Activated naive CD4-positive, alpha-beta T cell treated with anti-CD3 and anti-CD28 coated beads for 36 hours (primary cell): ENCODE measurements at regions of chr22 and their contacts with region 1.

Region 1: DNA sequence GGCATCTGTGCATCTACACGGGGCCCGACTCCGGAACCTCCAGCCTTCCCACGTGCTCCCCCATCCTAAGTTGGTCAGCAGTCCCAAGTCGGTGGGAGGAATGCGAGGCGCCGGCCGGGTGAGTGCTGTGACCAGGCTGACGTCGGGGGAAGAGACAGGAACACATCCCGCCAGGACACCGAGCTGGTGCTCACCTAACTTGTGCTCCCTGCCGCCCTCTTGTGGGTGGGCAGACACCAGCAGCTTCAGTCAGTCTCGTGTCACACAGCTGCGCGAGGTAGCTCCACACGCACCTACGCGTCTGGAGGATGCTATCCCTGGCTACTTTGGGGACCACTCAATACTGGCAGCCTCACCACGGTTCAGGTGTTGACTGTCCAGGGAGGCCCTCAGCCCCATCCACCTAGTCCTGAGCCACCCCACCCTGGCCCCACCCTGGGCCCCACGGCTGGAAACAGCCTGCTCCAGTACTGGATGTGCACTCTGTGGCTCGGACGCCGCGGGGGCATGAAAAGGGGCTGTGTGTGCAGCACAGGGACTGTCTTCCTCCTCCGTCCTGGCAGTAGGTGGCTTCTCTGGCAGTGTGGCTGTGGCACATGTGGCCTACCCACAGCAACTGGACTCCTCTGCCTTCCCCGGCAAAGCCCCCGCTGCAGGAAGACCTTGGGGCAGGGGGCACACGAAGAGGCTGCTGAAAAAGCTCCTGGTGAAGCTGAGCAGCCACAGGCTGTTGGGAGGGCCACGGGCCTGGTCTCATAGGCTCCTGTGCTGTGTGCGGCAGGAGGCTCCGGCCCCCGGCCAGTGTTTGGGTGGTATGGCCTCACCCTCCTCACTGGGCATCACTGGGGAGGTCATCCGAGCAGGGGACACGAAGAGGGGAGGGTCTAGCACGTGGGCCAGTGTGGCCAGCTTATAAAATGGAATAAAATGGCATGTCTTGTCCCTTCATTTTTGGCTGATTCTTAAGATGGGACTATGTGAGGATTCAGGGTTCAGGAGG is 11.2 kb upstream of the BID start:
- DNase-seq: peak; percentile 76
- H3K4me3 Mint-ChIP-seq: no peak overlapping the region
- H3K27ac Mint-ChIP-seq: no peak overlapping the region
- H3K4me1 Mint-ChIP-seq: peaks cover 20% of the 10 kb centered on the region
- H3K27me3 Mint-ChIP-seq: no peaks in the 10 kb centered on the region

Region 2: GRCh38 chr22:17213976-17214375 is 571.5 kb before region 1 on chr22:
- CTCF ChIA-PET with region 1: no interaction called
- intact Hi-C with region 1: loop called (anchors 5 kb)
- DNase-seq: peak; percentile 73
- H3K4me3 Mint-ChIP-seq: no peak overlapping the region
- H3K27ac Mint-ChIP-seq: no peak overlapping the region
- H3K4me1 Mint-ChIP-seq: peaks cover 48% of the 10 kb centered on the region
- H3K27me3 Mint-ChIP-seq: no peaks in the 10 kb centered on the region

Region 3: GRCh38 chr22:17706018-17706900 is 79.2 kb before region 1 on chr22:
- CTCF ChIA-PET with region 1: interaction called, 4 read pairs
- intact Hi-C with region 1: loop called (anchors 1 kb)
- DNase-seq: peak; percentile 67
- H3K4me3 Mint-ChIP-seq: peak overlapping the region; percentile 49
- H3K27ac Mint-ChIP-seq: peak overlapping the region; percentile 89
- H3K4me1 Mint-ChIP-seq: peaks cover 20% of the 10 kb centered on the region
- H3K27me3 Mint-ChIP-seq: no peaks in the 10 kb centered on the region

Region 4: GRCh38 chr22:17754233-17754925 is 31.1 kb before region 1 on chr22:
- CTCF ChIA-PET with region 1: interaction called, 12 read pairs
- intact Hi-C with region 1: loop called (anchors 2 kb)
- DNase-seq: peak; percentile 56
- H3K4me3 Mint-ChIP-seq: no peak overlapping the region
- H3K27ac Mint-ChIP-seq: no peak overlapping the region
- H3K4me1 Mint-ChIP-seq: peaks cover 6% of the 10 kb centered on the region
- H3K27me3 Mint-ChIP-seq: no peaks in the 10 kb centered on the region

Region 5: GRCh38 chr22:17773606-17774205 is 11.8 kb before region 1 on chr22:
- CTCF ChIA-PET with region 1: interaction called, 15 read pairs
- intact Hi-C with region 1: loop called (anchors 1 kb)
- DNase-seq: peak; percentile 79
- H3K4me3 Mint-ChIP-seq: peak overlapping the region; percentile 82
- H3K27ac Mint-ChIP-seq: peak overlapping the region; percentile 66
- H3K4me1 Mint-ChIP-seq: peaks cover 76% of the 10 kb centered on the region
- H3K27me3 Mint-ChIP-seq: no peaks in the 10 kb centered on the region